ENCODE measurements at regions of chr7 and their contacts with region 1.

Region 1: GRCh38 chr7:141654551-141654950 is 47.4 kb downstream of the DENND11 start:
- DNase-seq: peak in 3 of 4 donors; percentile 52 to 81 (median 59)
- ATAC-seq: peak; percentile 88
- H3K4me3 ChIP-seq: no peak overlapping the region
- H3K27ac ChIP-seq: no peak overlapping the region
- H3K4me1 ChIP-seq: peaks cover 0 to 2% of the 10 kb centered on the region in 2 donors
- H3K27me3 ChIP-seq: no peaks in the 10 kb centered on the region
- CTCF ChIP-seq: peak; percentile 56 to 71

Region 2: DNA sequence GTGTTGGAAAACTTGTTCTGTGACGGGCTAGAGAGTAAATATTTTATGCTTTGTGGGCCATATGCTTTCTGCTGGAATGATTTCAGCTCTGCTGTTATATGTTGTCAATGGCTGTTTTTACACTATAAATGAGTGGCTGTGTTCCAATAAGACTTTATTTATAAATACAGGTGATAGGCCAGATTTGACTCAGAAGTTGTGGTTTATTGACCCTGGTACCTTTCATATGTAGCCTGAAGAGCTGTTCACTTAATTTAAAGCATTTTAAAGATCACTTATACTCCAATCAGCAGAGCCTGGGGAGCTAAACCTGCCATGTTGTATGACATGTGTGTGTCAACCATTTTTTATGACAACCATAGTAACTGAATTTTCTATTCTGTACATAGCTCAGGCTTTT is 74.5 kb after region 1 on chr7:
- intact Hi-C with region 1: loop called in 1 of 2 experiments (anchors 5 kb)
- DNase-seq: no peak
- ATAC-seq: no peak
- H3K4me3 ChIP-seq: no peak overlapping the region
- H3K27ac ChIP-seq: no peak overlapping the region
- H3K4me1 ChIP-seq: no peaks in the 10 kb centered on the region
- H3K27me3 ChIP-seq: no peaks in the 10 kb centered on the region
- CTCF ChIP-seq: no peak

Measured in left lung (tissue), 14 donors.